Activated CD4-positive, alpha-beta T cell treated with anti-CD3 and anti-CD28 coated beads for 36 hours (primary cell): ENCODE measurements at regions of chr1 and their contacts with region 1.

Region 1: DNA sequence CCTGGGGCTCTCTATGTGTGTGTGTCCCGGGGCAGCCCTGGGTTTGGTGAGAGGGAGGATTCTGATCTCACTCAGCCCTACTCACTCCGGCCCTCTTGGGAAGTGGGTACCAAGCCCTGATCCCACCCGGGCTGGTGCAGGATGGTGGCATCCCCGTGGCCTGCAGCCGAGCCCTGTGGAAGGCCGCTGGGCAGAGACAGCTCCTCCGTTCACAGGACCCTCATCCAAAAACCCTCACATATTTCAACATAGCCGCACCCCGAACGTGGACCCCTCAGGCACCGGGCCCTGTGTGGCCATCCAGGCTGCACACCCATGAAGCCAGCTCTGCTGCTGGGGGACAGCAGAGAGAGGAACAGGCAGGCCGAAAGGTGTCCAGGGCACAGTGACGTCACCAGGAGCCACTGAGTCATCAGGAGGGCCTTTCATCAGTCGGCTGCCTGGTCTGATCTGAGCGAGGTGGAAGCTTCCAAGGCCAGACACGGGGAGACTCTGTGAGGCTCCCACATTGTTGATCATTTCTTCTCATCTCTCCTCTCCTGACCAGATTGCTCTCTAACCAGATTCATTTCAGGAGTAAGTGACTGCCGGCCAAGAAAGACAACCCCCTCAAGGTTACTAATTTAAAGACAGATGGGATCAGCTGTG is 16.2 kb upstream of the GPR157 start:
- DNase-seq: peak; percentile 57
- ATAC-seq: peak; percentile 61
- H3K4me3 Mint-ChIP-seq: no peak overlapping the region
- H3K27ac Mint-ChIP-seq: no peak overlapping the region
- H3K4me1 Mint-ChIP-seq: peaks cover 3% of the 10 kb centered on the region
- H3K27me3 Mint-ChIP-seq: no peaks in the 10 kb centered on the region

Region 2: DNA sequence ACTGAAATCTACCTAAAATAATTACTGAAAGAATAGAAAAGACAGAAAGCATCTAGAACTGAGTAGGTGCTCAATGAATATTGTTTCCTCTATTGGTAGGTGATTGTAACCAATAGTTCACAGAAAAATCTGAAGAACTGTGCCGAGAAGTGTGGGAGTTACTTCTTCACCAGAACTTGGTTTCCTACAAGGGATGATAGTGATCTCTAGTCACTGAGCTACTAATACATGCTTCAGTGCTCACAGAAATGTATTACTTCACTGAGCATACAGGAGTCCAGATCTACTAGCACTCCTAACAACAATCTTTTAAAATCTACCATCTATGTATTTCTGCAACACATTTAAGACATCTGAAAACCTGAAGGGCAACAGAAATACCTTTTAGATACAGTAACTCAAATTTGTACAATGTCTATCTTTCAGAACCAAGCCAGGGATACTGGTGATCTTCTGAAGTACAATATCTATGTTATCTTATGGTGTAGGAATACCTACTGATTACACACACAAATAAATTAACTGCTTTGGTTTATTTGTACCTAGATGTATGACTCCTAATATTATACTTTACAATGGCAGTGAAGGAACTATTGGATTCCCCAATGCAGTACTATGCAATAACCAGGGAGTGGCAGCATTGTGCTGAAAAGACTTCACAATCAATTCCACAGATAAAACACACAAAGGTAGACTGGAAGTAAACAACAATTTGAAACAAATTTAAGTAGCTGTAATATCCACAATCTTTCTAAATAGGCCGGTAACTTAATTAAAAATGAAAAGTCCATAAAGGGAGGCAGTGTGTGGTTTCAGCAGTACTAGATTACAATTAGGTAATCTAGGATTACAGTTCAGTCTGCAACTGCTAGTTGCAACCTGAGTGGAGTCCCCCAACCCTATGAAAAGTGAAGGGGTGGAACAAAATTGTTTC is 584.3 kb before region 1 on chr1:
- CTCF ChIA-PET with region 1: no interaction called
- POLR2A ChIA-PET with region 1: no interaction called
- intact Hi-C with region 1: no loop called
- DNase-seq: peak; percentile 34
- ATAC-seq: peak; percentile 80
- H3K4me3 Mint-ChIP-seq: no peak overlapping the region
- H3K27ac Mint-ChIP-seq: peak overlapping the region; percentile 56
- H3K4me1 Mint-ChIP-seq: peaks cover 49% of the 10 kb centered on the region
- H3K27me3 Mint-ChIP-seq: no peaks in the 10 kb centered on the region

Region 3: GRCh38 chr1:9128520-9129265 is 16.5 kb before region 1 on chr1 and contains the start of gene GPR157:
- CTCF ChIA-PET with region 1: interaction called, 13 read pairs
- POLR2A ChIA-PET with region 1: interaction called, 3 read pairs
- intact Hi-C with region 1: no loop called
- DNase-seq: peak; percentile 93
- ATAC-seq: peak; percentile 84
- H3K4me3 Mint-ChIP-seq: peak within 1 kb of the TSS; percentile 83
- H3K27ac Mint-ChIP-seq: peak within 1 kb of the TSS; percentile 67
- H3K4me1 Mint-ChIP-seq: peaks cover 37% of the 10 kb centered on the region
- H3K27me3 Mint-ChIP-seq: no peaks in the 10 kb centered on the region
- total RNA-seq, gene GPR157: 2.7 to 3.6 TPM

Region 4: DNA sequence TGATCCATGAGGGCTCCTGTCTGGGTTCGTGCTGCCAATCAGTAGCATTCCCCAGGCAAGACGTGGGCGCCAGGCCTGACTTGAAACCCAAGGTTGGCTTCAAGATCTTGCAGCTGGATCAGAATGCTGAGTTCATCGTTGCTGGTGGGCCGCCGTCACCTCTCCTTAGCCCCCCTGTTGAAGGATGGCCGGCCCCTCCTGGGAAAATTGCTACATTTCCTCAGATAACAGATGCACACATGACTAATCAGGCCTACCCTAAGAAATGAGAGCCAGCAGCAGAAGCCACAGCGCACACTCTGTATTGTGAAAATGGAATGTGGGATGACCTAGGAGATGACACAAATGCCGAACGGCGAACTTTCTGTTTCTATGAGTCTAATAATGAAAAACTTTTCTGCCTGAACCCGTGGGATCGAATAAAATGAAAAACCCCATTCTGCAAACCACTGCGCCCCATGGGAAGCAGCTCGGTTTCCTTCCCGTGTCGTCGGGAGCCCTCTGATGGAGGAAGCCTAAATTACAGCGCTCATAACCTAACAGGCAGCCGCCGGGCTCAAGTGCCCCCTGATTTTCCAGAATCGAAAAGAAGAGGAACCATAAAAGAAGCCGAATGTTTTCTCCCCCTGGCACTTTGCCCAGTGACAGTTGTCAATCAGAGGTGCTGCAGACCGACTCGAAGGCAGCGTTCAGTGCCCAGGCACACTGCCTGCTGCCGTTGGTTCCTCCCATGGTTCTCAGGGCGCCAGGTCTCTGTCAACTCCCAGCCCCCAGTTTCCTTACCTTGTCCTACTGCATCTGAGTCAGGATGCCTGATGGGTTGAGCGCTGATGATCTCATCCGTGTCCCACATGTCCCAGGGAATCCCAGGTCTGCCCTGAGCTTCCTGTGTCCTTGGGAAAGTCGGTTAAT is 51.2 kb after region 1 on chr1:
- CTCF ChIA-PET with region 1: interaction called, 12 read pairs
- POLR2A ChIA-PET with region 1: no interaction called
- intact Hi-C with region 1: loop called (anchors 1 kb)
- DNase-seq: peak; percentile 83
- ATAC-seq: peak; percentile 84
- H3K4me3 Mint-ChIP-seq: no peak overlapping the region
- H3K27ac Mint-ChIP-seq: no peak overlapping the region
- H3K4me1 Mint-ChIP-seq: peaks cover 19% of the 10 kb centered on the region
- H3K27me3 Mint-ChIP-seq: peaks cover 45% of the 10 kb centered on the region

Region 5: GRCh38 chr1:9201401-9202239 is 56.5 kb after region 1 on chr1:
- CTCF ChIA-PET with region 1: interaction called, 12 read pairs
- POLR2A ChIA-PET with region 1: no interaction called
- intact Hi-C with region 1: loop called (anchors 1 kb)
- DNase-seq: peak; percentile 39
- ATAC-seq: peak; percentile 14
- H3K4me3 Mint-ChIP-seq: no peak overlapping the region
- H3K27ac Mint-ChIP-seq: no peak overlapping the region
- H3K4me1 Mint-ChIP-seq: peaks cover 31% of the 10 kb centered on the region
- H3K27me3 Mint-ChIP-seq: peaks cover 79% of the 10 kb centered on the region

Region 6: GRCh38 chr1:9249534-9250410 is 104.6 kb after region 1 on chr1:
- CTCF ChIA-PET with region 1: interaction called, 3 read pairs
- POLR2A ChIA-PET with region 1: no interaction called
- intact Hi-C with region 1: loop called in 1 of 2 experiments (anchors 1 kb)
- DNase-seq: peak; percentile 68
- ATAC-seq: peak; percentile 79
- H3K4me3 Mint-ChIP-seq: no peak overlapping the region
- H3K27ac Mint-ChIP-seq: no peak overlapping the region
- H3K4me1 Mint-ChIP-seq: peaks cover 6% of the 10 kb centered on the region
- H3K27me3 Mint-ChIP-seq: no peaks in the 10 kb centered on the region